CD4-positive, alpha-beta memory T cell (primary cell): ENCODE measurements at regions of chr9 and their contacts with region 1.

Region 1: GRCh38 chr9:83707768-83708514 is at the start of gene UBQLN1:
- DNase-seq: peak; percentile 93 to 98 (median 95)
- H3K4me3 ChIP-seq: peak within 1 kb of the TSS; percentile 94 to 97
- H3K4me3 Mint-ChIP-seq: peak within 1 kb of the TSS; percentile 87 to 99 (median 92)
- H3K27ac ChIP-seq: peak within 1 kb of the TSS; percentile 98
- H3K27ac Mint-ChIP-seq: peak within 1 kb of the TSS; percentile 99 to 100 (median 100)
- H3K4me1 ChIP-seq: peaks cover 42% of the 10 kb centered on the region
- H3K4me1 Mint-ChIP-seq: peaks cover 30 to 45% (median 38%) of the 10 kb centered on the region in 4 donors
- H3K27me3 ChIP-seq: no peaks in the 10 kb centered on the region
- H3K27me3 Mint-ChIP-seq: no peaks in the 10 kb centered on the region
- total RNA-seq, gene UBQLN1: 106 to 122 TPM

Region 2: GRCh38 chr9:83622939-83623678 is 84.8 kb before region 1 on chr9 and contains the start of gene IDNK:
- CTCF ChIA-PET with region 1: interaction called, 20 read pairs
- POLR2A ChIA-PET with region 1: interaction called, 59 read pairs
- intact Hi-C with region 1: loop called (anchors 1 kb)
- DNase-seq: peak; percentile 66 to 72 (median 69)
- H3K4me3 ChIP-seq: peak within 1 kb of the TSS; percentile 30 to 63
- H3K4me3 Mint-ChIP-seq: peak within 1 kb of the TSS; percentile 92 to 99 (median 95)
- H3K27ac ChIP-seq: peak within 1 kb of the TSS; percentile 82
- H3K27ac Mint-ChIP-seq: peak within 1 kb of the TSS; percentile 85 to 97 (median 94)
- H3K4me1 ChIP-seq: peaks cover 24% of the 10 kb centered on the region
- H3K4me1 Mint-ChIP-seq: peaks cover 21 to 41% (median 33%) of the 10 kb centered on the region in 4 donors
- H3K27me3 ChIP-seq: no peaks in the 10 kb centered on the region
- H3K27me3 Mint-ChIP-seq: no peaks in the 10 kb centered on the region
- total RNA-seq, gene IDNK: 10.1 to 10.2 TPM

Region 3: GRCh38 chr9:83665580-83666200 is 42.3 kb before region 1 on chr9:
- CTCF ChIA-PET with region 1: interaction called, 5 read pairs
- POLR2A ChIA-PET with region 1: interaction called, 3 read pairs
- intact Hi-C with region 1: loop called (anchors 5 kb)
- DNase-seq: no peak
- H3K4me3 ChIP-seq: no peak overlapping the region
- H3K4me3 Mint-ChIP-seq: no peak overlapping the region
- H3K27ac ChIP-seq: no peak overlapping the region
- H3K27ac Mint-ChIP-seq: peak overlapping the region in 2 of 7 donors; percentile 14 to 62
- H3K4me1 ChIP-seq: no peaks in the 10 kb centered on the region
- H3K4me1 Mint-ChIP-seq: peaks cover 6 to 11% (median 7%) of the 10 kb centered on the region in 4 donors
- H3K27me3 ChIP-seq: no peaks in the 10 kb centered on the region
- H3K27me3 Mint-ChIP-seq: no peaks in the 10 kb centered on the region

Region 4: GRCh38 chr9:83688921-83689320 is 19.0 kb before region 1 on chr9:
- CTCF ChIA-PET with region 1: interaction called, 6 read pairs
- POLR2A ChIA-PET with region 1: interaction called, 19 read pairs
- intact Hi-C with region 1: loop called (anchors 2 kb)
- DNase-seq: no peak
- H3K4me3 ChIP-seq: no peak overlapping the region
- H3K4me3 Mint-ChIP-seq: peak overlapping the region in 6 of 8 donors; percentile 26 to 72 (median 42)
- H3K27ac ChIP-seq: no peak overlapping the region
- H3K27ac Mint-ChIP-seq: peak overlapping the region in 2 of 7 donors; percentile 9 to 30
- H3K4me1 ChIP-seq: peaks cover 85% of the 10 kb centered on the region
- H3K4me1 Mint-ChIP-seq: peaks cover 56 to 78% (median 67%) of the 10 kb centered on the region in 4 donors
- H3K27me3 ChIP-seq: no peaks in the 10 kb centered on the region
- H3K27me3 Mint-ChIP-seq: no peaks in the 10 kb centered on the region

Region 5: GRCh38 chr9:83956434-83957247 is 248.7 kb after region 1 on chr9:
- CTCF ChIA-PET with region 1: no interaction called
- POLR2A ChIA-PET with region 1: interaction called, 14 read pairs
- intact Hi-C with region 1: no loop called
- DNase-seq: peak; percentile 38 to 60 (median 41)
- H3K4me3 ChIP-seq: peak overlapping the region; percentile 83 to 98
- H3K4me3 Mint-ChIP-seq: peak overlapping the region; percentile 94 to 98 (median 98)
- H3K27ac ChIP-seq: peak overlapping the region; percentile 71
- H3K27ac Mint-ChIP-seq: peak overlapping the region; percentile 83 to 97 (median 92)
- H3K4me1 ChIP-seq: peaks cover 21% of the 10 kb centered on the region
- H3K4me1 Mint-ChIP-seq: peaks cover 11 to 26% (median 17%) of the 10 kb centered on the region in 4 donors
- H3K27me3 ChIP-seq: no peaks in the 10 kb centered on the region
- H3K27me3 Mint-ChIP-seq: no peaks in the 10 kb centered on the region